Endothelial cell of umbilical vein (primary cell): ENCODE measurements at regions of chr18 and their contacts with region 1.

Region 1: DNA sequence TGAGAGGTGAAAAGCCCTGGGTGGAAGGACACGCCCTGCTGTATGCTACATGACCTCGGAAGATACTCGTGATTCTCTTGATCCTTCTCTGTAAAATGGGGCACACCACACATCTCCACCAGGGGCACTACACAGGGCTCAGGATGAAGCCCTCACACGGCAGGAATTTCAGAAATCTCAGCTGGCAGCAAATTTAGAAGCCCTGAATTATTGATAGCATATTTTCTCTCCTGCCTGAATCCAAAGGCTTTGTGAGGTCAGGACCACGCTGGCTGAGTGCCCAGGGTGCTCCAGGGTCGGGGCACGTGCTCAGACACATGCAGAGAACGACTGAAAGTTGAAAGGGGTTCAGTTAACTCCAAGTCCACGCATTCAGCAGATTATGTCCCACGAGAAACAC is 42.1 kb upstream of the GALR1 start:
- DNase-seq: peak; percentile 51
- H3K4me3 ChIP-seq: no peak overlapping the region
- H3K27ac ChIP-seq: no peak overlapping the region
- H3K4me1 ChIP-seq: no peaks in the 10 kb centered on the region
- H3K27me3 ChIP-seq: peaks cover 0 to 2% of the 10 kb centered on the region in 2 experiments
- CTCF ChIP-seq: peak; percentile 65 to 67
- POLR2A ChIP-seq: no peak

Region 2: GRCh38 chr18:76982841-76983587 is 224.5 kb before region 1 on chr18:
- CTCF ChIA-PET with region 1: interaction called, 12 read pairs
- POLR2A ChIA-PET with region 1: no interaction called
- dilution Hi-C with region 1: no loop called
- intact Hi-C with region 1: no loop called
- DNase-seq: peak; percentile 80
- H3K4me3 ChIP-seq: no peak overlapping the region
- H3K27ac ChIP-seq: no peak overlapping the region
- H3K4me1 ChIP-seq: no peaks in the 10 kb centered on the region
- H3K27me3 ChIP-seq: peaks cover 0 to 7% of the 10 kb centered on the region in 2 experiments
- CTCF ChIP-seq: peak; percentile 89 to 91
- POLR2A ChIP-seq: no peak

Region 3: DNA sequence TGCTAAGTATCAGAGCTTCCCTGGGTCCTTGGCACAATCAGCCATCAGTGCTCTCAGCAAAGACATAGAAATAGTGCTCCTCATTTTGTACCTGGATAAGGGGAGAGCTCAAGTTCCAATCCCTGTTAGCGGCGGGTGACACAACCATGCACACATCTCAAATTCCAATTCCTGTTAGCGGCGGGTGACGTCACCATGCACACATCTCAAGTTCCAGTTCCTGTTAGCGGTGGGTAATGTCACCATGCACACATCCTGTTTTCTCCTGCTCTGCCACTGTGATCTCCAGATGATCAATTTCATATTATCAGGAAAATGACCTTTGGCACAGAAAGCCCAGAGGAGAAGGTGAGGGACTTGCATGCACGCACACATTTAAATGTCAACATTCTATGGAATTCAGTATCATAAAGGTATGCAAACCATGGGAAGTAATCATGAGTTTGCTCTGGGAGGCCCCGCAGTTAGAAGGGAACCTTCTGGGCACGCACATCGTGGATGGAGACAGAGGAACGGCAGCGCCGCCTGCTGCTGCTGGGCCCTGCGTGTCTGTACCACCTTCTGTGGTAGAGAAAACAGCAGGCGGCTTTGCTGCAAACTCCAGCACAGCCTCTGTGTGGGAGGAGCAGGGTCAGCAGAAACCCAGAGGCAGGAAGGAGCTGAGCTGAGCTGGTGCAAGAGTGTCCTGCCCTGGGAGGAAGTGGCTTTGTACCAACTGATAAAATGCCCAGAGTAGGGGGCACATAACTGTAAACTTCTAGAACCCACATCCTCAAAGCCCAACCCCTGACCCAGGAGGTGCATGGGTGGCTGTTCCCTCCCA is 152.7 kb before region 1 on chr18:
- CTCF ChIA-PET with region 1: interaction called, 47 read pairs
- POLR2A ChIA-PET with region 1: no interaction called
- dilution Hi-C with region 1: no loop called
- intact Hi-C with region 1: loop called (anchors 1 kb)
- DNase-seq: peak; percentile 88
- H3K4me3 ChIP-seq: peak overlapping the region in 1 of 3 experiments; percentile 17
- H3K27ac ChIP-seq: peak overlapping the region; percentile 37
- H3K4me1 ChIP-seq: peaks cover 22% of the 10 kb centered on the region
- H3K27me3 ChIP-seq: no peaks in the 10 kb centered on the region
- CTCF ChIP-seq: peak; percentile 64 to 84
- POLR2A ChIP-seq: no peak

Region 4: DNA sequence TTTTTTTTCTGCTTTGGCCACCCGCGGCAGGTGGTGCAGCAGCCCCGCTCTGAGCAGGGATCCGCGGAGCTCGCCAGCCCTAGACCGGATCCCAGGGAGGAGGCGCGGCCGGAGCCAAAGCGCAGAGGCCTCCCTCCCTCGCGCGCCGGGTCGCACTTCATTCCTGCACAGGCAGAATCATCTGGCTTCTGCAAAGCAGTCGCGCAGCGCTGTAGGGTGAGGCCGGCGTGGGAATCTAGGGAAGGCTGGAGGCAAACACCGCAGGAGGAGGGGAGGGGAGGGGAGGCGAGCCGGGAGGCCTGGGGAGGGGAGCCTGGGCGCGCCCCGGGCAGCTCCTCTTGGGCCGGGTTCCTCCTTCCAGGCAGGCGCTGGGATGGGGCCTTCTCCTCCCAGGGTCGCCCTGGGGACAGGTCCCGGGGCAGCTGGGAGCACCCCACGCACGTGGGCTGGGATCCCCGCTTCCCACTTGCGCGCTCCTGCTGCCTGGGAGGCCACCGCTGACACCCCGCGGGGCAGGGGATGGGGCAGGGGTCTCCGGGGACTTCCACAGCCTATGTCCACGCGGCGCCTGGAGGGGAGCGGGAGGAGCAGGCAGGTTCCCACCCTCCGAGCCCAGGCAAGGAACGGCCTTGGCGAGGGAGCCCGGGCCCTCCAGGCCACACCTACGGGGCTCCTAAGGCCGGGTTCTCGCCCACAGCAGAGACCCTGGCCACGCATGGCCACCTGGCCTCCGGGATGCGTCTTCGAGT is 120.0 kb before region 1 on chr18:
- CTCF ChIA-PET with region 1: interaction called, 10 read pairs
- POLR2A ChIA-PET with region 1: no interaction called
- dilution Hi-C with region 1: no loop called
- intact Hi-C with region 1: no loop called
- DNase-seq: peak; percentile 37
- H3K4me3 ChIP-seq: peak overlapping the region; percentile 6 to 49 (median 40)
- H3K27ac ChIP-seq: peak overlapping the region; percentile 74
- H3K4me1 ChIP-seq: peaks cover 13% of the 10 kb centered on the region
- H3K27me3 ChIP-seq: no peaks in the 10 kb centered on the region
- CTCF ChIP-seq: no peak
- POLR2A ChIP-seq: no peak

Region 5: GRCh38 chr18:77132371-77133050 is 75.0 kb before region 1 on chr18 and contains the start of gene MBP:
- CTCF ChIA-PET with region 1: interaction called, 10 read pairs
- POLR2A ChIA-PET with region 1: no interaction called
- dilution Hi-C with region 1: no loop called
- intact Hi-C with region 1: loop called (anchors 5 kb)
- DNase-seq: no peak
- H3K4me3 ChIP-seq: peak within 1 kb of the TSS; percentile 44 to 48 (median 46)
- H3K27ac ChIP-seq: no peak within 1 kb of the TSS
- H3K4me1 ChIP-seq: peaks cover 13% of the 10 kb centered on the region
- H3K27me3 ChIP-seq: peaks cover 4 to 28% of the 10 kb centered on the region in 2 experiments
- CTCF ChIP-seq: no peak
- POLR2A ChIP-seq: no peak
- total RNA-seq, gene MBP: 1.7 and 4.0 TPM in 2 replicates